ENCODE measurements at regions of chr17 and their contacts with region 1.

Region 1: DNA sequence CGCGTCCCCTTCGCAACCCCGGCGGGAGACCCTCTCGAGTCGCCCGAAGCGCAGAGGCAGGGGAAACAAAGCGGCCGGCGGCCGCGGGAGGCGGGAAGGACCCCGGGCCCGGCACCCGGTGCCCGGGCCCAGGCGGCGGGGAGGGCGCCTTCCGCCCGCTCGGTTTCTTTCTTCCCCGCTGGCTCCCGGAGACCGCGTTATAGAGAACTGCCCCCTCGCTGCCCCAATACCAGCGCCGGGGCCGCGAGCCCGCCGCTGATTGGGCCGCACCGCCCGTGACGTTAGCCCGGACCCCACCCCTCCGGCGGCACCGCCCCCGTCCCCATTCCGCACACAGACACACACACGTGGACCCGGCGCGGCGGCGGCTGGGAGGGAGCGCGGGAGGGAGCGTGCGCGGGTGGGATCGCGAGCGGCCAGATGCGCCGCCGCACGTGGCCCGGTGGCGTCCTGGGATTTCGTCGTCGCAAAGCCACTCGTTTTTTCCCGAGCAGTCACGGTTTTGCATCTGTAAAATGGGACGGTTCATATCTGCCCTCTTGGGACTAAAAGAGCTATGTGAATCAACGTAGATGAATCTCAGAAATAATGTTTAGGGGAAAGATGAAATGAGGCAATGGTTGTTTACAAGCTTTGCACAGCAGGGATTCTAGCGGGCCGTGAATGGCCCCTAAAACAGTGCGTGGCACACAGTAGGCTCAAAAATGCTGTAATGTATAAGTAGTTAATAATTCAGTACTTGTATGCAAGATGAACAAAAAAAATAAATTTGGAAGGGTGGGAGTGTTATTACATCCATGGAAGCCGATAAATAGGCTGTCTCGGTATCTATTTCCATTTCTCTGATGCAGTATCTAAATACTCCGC is at the start of gene EPOP:
- DNase-seq: no peak
- ATAC-seq: peak; percentile 88
- H3K4me3 ChIP-seq: peak within 1 kb of the TSS; percentile 84
- H3K27ac ChIP-seq: no peak within 1 kb of the TSS
- H3K4me1 ChIP-seq: peaks cover 34% of the 10 kb centered on the region
- H3K27me3 ChIP-seq: peaks cover 8 to 12% of the 10 kb centered on the region in 2 experiments; a peak in 2 of 4 replicates
- CTCF ChIP-seq: no peak
- EP300 ChIP-seq: no peak
- POLR2A ChIP-seq: peak; percentile 62
- RAD21 ChIP-seq: no peak
- polyA plus RNA-seq, gene EPOP: 0.53 to 1.4 TPM

Region 2: DNA sequence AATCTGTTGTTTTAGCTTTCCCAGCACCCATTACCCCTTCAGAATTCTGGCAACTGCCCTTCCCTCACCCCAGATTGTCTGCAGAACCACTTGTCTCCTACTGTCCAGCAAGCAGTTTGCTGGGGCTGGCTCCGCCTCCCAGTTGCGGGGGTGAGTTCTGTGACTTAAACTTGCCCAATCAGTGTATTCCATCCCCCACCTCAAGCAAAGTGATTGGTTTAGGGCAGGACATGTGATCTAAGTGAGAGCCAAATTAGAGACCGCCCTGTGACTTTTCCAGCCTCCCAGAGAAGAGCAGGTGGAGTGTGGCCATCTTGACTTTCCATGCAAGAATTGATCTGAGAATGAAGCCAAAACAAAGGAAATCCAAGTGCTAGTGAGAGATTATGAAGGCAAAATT is 46.5 kb before region 1 on chr17:
- CTCF ChIA-PET with region 1: no interaction called
- POLR2A ChIA-PET with region 1: no interaction called
- RAD21 ChIA-PET with region 1: no interaction called
- SMC1A ChIA-PET with region 1: no interaction called
- in situ Hi-C with region 1: no loop called
- intact Hi-C with region 1: no loop called
- DNase-seq: no peak
- ATAC-seq: peak; percentile 49
- H3K4me3 ChIP-seq: no peak overlapping the region
- H3K27ac ChIP-seq: no peak overlapping the region
- H3K4me1 ChIP-seq: peaks cover 6% of the 10 kb centered on the region
- H3K27me3 ChIP-seq: no peaks in the 10 kb centered on the region
- CTCF ChIP-seq: no peak
- EP300 ChIP-seq: no peak
- POLR2A ChIP-seq: no peak
- RAD21 ChIP-seq: no peak

Region 3: DNA sequence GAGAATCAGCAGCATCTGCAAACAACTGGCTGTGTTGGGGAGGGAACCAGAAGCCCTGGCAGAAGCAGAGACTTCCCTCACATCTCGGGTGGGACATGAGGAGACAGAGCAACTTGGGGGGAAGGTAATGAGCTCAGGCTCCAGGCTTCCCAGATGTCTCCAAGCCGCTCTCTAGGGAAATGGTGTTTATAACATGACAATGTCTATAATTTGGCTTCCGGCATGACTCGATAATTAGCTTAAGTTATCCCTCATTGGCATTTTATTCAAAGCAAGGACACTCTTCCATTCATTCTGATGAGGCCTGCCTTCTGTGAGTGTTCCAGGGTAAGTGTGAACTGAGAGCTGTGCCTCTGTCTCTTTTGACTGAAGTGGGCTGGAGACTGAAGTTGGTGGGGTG is 15.4 kb after region 1 on chr17:
- CTCF ChIA-PET with region 1: interaction called, 15 read pairs
- POLR2A ChIA-PET with region 1: interaction called, 5 read pairs
- RAD21 ChIA-PET with region 1: interaction called, 7 read pairs
- SMC1A ChIA-PET with region 1: interaction called, 5 read pairs
- in situ Hi-C with region 1: no loop called
- intact Hi-C with region 1: no loop called
- DNase-seq: no peak
- ATAC-seq: no peak
- H3K4me3 ChIP-seq: no peak overlapping the region
- H3K27ac ChIP-seq: no peak overlapping the region
- H3K4me1 ChIP-seq: no peaks in the 10 kb centered on the region; the same call in 1 of the 2 replicates
- H3K27me3 ChIP-seq: no peaks in the 10 kb centered on the region
- CTCF ChIP-seq: no peak
- EP300 ChIP-seq: no peak
- POLR2A ChIP-seq: no peak
- RAD21 ChIP-seq: no peak

Region 4: DNA sequence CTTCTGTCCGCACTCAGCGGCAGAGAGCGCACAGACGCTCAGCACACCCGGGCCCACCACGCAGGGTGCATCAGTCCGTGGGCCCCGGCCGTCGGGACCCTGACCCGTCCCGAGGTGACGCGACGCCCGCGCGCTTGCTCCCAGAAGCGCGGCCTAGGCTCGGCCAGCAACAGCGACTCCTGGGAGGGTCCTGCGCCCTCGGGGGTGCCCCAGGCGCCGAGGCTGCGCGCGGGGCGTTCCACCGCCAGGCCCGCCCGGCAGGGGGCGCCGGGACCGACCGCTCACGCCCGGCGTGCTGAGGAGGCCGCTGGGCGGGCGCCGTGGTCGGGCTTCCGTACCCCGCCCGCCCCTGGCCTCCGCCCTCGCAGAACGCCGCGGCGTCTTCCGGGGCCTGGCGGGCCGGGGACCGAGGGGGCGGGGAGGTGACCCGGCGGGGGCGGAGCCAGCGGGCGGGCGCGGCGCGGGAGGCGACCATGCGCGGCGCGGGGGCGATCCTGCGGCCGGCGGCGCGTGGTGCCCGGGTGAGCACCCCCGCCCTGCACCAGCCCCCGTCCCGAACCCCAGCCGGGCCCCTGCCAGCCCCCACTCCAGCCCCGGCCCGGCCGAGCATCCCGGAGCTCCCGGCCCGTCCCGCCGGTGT is 55.0 kb after region 1 on chr17 and contains the start of gene CISD3:
- CTCF ChIA-PET with region 1: interaction called, 170 read pairs
- POLR2A ChIA-PET with region 1: interaction called, 19 read pairs
- RAD21 ChIA-PET with region 1: interaction called, 66 read pairs
- SMC1A ChIA-PET with region 1: interaction called, 50 read pairs
- in situ Hi-C with region 1: loop called (anchors 5 kb)
- intact Hi-C with region 1: loop called (anchors 1 kb)
- DNase-seq: no peak
- ATAC-seq: peak; percentile 92
- H3K4me3 ChIP-seq: peak within 1 kb of the TSS; percentile 90
- H3K27ac ChIP-seq: peak within 1 kb of the TSS; percentile 52
- H3K4me1 ChIP-seq: peaks cover 38% of the 10 kb centered on the region
- H3K27me3 ChIP-seq: no peaks in the 10 kb centered on the region
- CTCF ChIP-seq: peak; percentile 61 to 81 (median 65); a peak in 4 of 6 replicates
- EP300 ChIP-seq: 0 out of 4 replicates have a peak, but pooled peaks of 1 of the 2 experiments have one; percentile 28
- POLR2A ChIP-seq: peak; percentile 71; the same call in 1 of the 2 replicates
- RAD21 ChIP-seq: peak; percentile 33; the same call in 1 of the 2 replicates
- polyA plus RNA-seq, gene CISD3: 2.6 to 5.3 TPM

Region 5: DNA sequence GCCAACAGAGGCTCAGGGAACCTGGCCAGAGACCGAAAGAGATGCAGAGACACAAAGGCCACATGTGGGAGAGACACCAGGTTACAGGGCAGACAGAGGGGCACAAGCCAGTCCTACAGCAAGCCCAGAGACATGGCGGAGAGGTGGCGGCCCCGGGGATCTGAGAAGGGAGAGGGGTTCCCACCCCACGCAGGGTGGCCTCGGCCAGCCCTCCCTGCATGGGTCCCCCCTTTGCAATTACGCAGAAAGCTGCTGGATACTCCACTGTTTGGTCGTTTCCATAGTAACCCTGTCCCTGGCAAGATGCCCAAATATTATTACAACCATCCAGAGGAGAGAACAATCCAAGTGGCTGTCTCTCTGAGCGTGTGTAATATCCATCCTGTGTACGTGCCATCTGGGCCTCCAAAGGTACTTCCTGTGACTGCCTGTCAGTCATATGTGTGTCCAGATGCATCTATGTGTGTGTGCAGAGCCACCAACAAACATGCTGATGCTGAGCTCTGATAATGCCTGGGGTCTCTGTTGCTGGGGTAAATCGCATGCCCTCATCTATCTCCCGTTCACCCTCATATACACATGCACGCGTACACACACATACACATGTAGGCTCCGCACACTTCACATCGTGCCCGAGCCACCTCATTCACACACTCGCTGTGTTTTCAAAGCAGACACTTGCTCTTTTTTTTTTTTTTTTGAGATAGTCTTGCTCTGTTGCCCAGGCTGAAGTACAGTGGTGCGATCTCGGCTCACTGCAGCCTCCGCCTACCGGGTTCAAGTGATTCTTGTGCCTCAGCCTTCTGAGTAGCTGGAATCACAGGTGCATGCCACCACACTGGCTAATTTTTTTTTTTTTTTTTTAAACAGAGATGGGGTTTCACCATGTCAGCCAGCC is 67.7 kb after region 1 on chr17:
- CTCF ChIA-PET with region 1: interaction called, 170 read pairs
- POLR2A ChIA-PET with region 1: no interaction called
- RAD21 ChIA-PET with region 1: interaction called, 8 read pairs
- SMC1A ChIA-PET with region 1: interaction called, 50 read pairs
- in situ Hi-C with region 1: no loop called
- intact Hi-C with region 1: no loop called
- DNase-seq: no peak
- ATAC-seq: no peak
- H3K4me3 ChIP-seq: no peak overlapping the region
- H3K27ac ChIP-seq: no peak overlapping the region
- H3K4me1 ChIP-seq: peaks cover 34% of the 10 kb centered on the region
- H3K27me3 ChIP-seq: no peaks in the 10 kb centered on the region
- CTCF ChIP-seq: no peak
- EP300 ChIP-seq: no peak
- POLR2A ChIP-seq: no peak
- RAD21 ChIP-seq: no peak